ENCODE measurements at regions of chr12 and their contacts with region 1.

Region 1: DNA sequence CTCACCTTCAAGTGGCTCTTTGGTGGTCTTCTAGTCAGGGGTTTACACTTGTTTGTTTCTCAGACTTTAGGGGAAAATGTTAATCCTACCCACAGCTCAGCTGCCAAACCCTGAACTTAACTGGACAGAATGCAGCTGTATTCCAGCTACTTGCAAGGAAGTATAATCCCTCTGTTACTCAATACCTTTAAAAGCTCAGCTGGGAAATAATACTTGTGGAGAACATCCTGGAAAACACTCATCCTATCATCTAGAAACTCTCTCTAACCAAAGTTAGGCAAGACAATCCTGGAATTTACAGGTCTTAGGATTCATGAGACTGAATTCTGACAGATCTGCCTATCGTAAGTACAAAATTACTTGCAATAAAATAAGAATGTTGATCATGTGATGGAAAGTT is 404.1 kb downstream of the ADAMTS20 start:
- DNase-seq: peak; percentile 62
- H3K4me3 Mint-ChIP-seq: no peak overlapping the region
- H3K27ac Mint-ChIP-seq: peak overlapping the region; percentile 59
- H3K4me1 Mint-ChIP-seq: peaks cover 17% of the 10 kb centered on the region
- H3K27me3 Mint-ChIP-seq: no peaks in the 10 kb centered on the region
- CTCF ChIP-seq: no peak

Region 2: GRCh38 chr12:42961395-42961794 is 186.5 kb before region 1 on chr12:
- CTCF ChIA-PET with region 1: interaction called, 4 read pairs
- POLR2A ChIA-PET with region 1: interaction called, 11 read pairs
- intact Hi-C with region 1: no loop called
- DNase-seq: peak; percentile 91
- H3K4me3 Mint-ChIP-seq: no peak overlapping the region
- H3K27ac Mint-ChIP-seq: peak overlapping the region; percentile 71
- H3K4me1 Mint-ChIP-seq: peaks cover 50% of the 10 kb centered on the region
- H3K27me3 Mint-ChIP-seq: no peaks in the 10 kb centered on the region
- CTCF ChIP-seq: no peak

Region 3: DNA sequence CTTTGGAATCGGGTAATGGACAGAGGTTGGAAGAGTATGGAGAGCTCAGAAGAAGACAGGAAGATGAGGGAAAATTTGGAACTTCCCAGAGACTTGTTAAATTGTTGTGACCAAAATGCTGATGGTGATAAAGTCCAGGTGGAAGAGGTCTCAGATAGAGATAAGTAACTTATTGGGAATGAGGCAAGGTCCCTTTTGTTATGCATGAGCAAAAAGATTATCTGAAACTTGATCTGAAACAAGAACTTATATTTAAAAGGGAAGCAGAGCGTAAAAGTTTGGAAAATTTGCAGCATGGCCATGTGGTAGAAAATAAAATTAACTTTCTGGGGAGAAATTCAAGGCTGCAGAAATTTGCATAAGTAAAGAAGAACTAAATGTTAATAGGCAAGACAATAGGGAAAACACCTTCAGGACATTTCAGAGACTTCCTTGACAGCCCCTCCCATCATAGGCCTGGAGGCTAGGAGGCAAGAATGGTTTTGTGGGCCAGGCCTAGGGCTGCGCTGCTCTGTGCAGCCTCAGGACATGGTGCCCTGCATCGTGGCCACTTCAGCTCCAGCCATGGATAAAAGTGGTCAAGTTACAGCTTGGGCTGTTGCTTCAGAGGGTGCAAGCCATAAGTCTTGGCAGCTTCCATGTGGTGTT is 132.7 kb before region 1 on chr12:
- CTCF ChIA-PET with region 1: no interaction called
- POLR2A ChIA-PET with region 1: no interaction called
- intact Hi-C with region 1: no loop called
- DNase-seq: no peak
- H3K4me3 Mint-ChIP-seq: no peak overlapping the region
- H3K27ac Mint-ChIP-seq: no peak overlapping the region
- H3K4me1 Mint-ChIP-seq: no peaks in the 10 kb centered on the region
- H3K27me3 Mint-ChIP-seq: no peaks in the 10 kb centered on the region
- CTCF ChIP-seq: no peak

Region 4: DNA sequence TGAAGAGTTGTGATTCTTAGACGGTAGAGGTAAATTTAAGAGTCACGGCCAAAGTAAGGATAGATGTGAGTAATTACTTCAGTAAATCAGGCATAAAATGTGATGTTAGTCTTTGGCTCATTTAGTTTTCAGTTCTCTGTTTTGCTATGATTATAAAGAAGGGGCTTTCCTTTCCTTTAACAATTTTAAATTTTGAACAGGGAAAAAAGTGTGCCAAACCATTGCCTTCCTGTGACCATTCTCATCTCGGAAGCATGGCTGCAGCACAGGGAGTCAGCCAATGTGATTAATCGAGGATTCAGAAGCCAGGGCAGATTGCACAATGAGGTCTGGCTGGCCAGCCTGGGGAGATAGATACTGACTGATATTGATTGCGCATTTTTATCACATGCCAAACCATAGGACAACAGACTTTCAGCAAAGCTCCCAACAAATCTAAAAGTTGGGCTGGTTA is 78.1 kb before region 1 on chr12:
- CTCF ChIA-PET with region 1: no interaction called
- POLR2A ChIA-PET with region 1: no interaction called
- intact Hi-C with region 1: no loop called
- DNase-seq: peak; percentile 22
- H3K4me3 Mint-ChIP-seq: no peak overlapping the region
- H3K27ac Mint-ChIP-seq: no peak overlapping the region
- H3K4me1 Mint-ChIP-seq: no peaks in the 10 kb centered on the region
- H3K27me3 Mint-ChIP-seq: no peaks in the 10 kb centered on the region
- CTCF ChIP-seq: no peak

Region 5: DNA sequence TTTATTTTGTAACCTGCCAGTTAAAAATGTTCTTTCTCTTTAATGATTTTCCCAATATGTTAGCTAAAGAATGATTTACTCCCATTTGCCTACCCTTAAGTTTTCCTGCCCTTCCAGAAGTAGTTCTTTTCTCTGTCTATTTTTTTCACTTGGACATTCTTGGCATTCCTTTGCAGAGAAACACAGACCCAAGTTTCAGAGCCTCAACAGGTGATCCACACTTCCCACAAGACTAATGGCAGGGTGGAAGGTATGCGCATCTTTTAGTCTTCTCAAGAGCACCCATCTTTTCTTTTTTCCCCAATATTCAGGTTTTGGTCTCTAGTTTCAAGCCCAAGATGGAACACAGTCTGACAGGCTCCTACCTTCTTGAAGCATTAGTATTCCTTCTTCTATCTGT is 16.6 kb before region 1 on chr12:
- CTCF ChIA-PET with region 1: interaction called, 7 read pairs
- POLR2A ChIA-PET with region 1: interaction called, 10 read pairs
- intact Hi-C with region 1: no loop called
- DNase-seq: no peak
- H3K4me3 Mint-ChIP-seq: no peak overlapping the region
- H3K27ac Mint-ChIP-seq: peak overlapping the region; percentile 6
- H3K4me1 Mint-ChIP-seq: peaks cover 10% of the 10 kb centered on the region
- H3K27me3 Mint-ChIP-seq: no peaks in the 10 kb centered on the region
- CTCF ChIP-seq: no peak

Region 6: DNA sequence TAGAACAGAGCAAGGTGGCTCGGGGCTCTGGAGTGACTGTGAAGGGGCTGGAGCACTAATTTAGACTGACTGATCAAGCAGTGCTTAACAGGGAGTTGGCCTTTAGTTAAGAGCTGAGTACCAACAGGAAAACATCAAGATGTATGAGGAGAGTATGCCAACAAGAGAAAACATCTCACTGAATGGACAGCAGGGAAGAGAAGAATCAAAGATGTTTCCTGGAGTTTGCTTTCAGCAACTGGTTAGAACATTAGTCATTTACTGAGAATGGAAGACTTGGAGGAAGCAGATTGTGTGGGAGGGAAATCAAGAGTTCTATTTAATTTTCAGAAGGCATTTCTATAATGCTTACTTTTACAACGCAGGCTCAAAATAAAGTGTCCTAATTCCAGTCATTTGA is 144.8 kb after region 1 on chr12:
- CTCF ChIA-PET with region 1: no interaction called
- POLR2A ChIA-PET with region 1: no interaction called
- intact Hi-C with region 1: no loop called
- DNase-seq: peak; percentile 21
- H3K4me3 Mint-ChIP-seq: no peak overlapping the region
- H3K27ac Mint-ChIP-seq: no peak overlapping the region
- H3K4me1 Mint-ChIP-seq: peaks cover 14% of the 10 kb centered on the region
- H3K27me3 Mint-ChIP-seq: no peaks in the 10 kb centered on the region
- CTCF ChIP-seq: no peak